ENCODE measurements at regions of chr19 and their contacts with region 1.

Region 1: GRCh38 chr19:38949580-38950367 is 19.0 kb downstream of the MRPS12 start:
- DNase-seq: peak; percentile 85 to 93 (median 90)
- ATAC-seq: peak; percentile 90 to 98 (median 96)
- H3K4me3 ChIP-seq: peak overlapping the region in 11 of 12 donors; percentile 9 to 50 (median 44)
- H3K27ac ChIP-seq: no peak overlapping the region
- H3K4me1 ChIP-seq: peaks cover 3 to 12% (median 8%) of the 10 kb centered on the region in 12 donors
- H3K27me3 ChIP-seq: peaks cover 0 to 11% (median 0%) of the 10 kb centered on the region in 9 donors
- CTCF ChIP-seq: no peak
- POLR2A ChIP-seq: no peak

Region 2: GRCh38 chr19:38417544-38418506 is 531.9 kb before region 1 on chr19:
- intact Hi-C with region 1: loop called in 1 of 10 experiments (anchors 10 kb)
- DNase-seq: peak; percentile 56 to 83 (median 76)
- ATAC-seq: peak; percentile 64 to 95 (median 86)
- H3K4me3 ChIP-seq: peak overlapping the region in 11 of 12 donors; percentile 18 to 56 (median 44)
- H3K27ac ChIP-seq: peak overlapping the region in 3 of 12 donors; percentile 18 to 52 (median 33)
- H3K4me1 ChIP-seq: peaks cover 0 to 16% (median 8%) of the 10 kb centered on the region in 12 donors
- H3K27me3 ChIP-seq: peaks cover 0 to 18% (median 0%) of the 10 kb centered on the region in 9 donors
- CTCF ChIP-seq: peak in 1 of 12 donors; percentile 5
- POLR2A ChIP-seq: no peak

Region 3: GRCh38 chr19:38544034-38544958 is 405.5 kb before region 1 on chr19:
- intact Hi-C with region 1: loop called in 1 of 10 experiments (anchors 5 kb)
- DNase-seq: peak in 4 of 5 donors; percentile 44 to 67 (median 55)
- ATAC-seq: peak; percentile 64 to 84 (median 83)
- H3K4me3 ChIP-seq: peak overlapping the region in 4 of 12 donors; percentile 9 to 44 (median 26)
- H3K27ac ChIP-seq: peak overlapping the region in 1 of 12 donors; percentile 14
- H3K4me1 ChIP-seq: peaks cover 0 to 14% (median 5%) of the 10 kb centered on the region in 12 donors
- H3K27me3 ChIP-seq: no peaks in the 10 kb centered on the region
- CTCF ChIP-seq: peak; percentile 43 to 69 (median 59)
- POLR2A ChIP-seq: no peak

Region 4: GRCh38 chr19:38606131-38606530 is 343.6 kb before region 1 on chr19:
- intact Hi-C with region 1: loop called in 1 of 10 experiments (anchors 10 kb)
- DNase-seq: no peak
- ATAC-seq: no peak
- H3K4me3 ChIP-seq: no peak overlapping the region
- H3K27ac ChIP-seq: no peak overlapping the region
- H3K4me1 ChIP-seq: no peaks in the 10 kb centered on the region
- H3K27me3 ChIP-seq: no peaks in the 10 kb centered on the region
- CTCF ChIP-seq: no peak
- POLR2A ChIP-seq: no peak

Region 5: DNA sequence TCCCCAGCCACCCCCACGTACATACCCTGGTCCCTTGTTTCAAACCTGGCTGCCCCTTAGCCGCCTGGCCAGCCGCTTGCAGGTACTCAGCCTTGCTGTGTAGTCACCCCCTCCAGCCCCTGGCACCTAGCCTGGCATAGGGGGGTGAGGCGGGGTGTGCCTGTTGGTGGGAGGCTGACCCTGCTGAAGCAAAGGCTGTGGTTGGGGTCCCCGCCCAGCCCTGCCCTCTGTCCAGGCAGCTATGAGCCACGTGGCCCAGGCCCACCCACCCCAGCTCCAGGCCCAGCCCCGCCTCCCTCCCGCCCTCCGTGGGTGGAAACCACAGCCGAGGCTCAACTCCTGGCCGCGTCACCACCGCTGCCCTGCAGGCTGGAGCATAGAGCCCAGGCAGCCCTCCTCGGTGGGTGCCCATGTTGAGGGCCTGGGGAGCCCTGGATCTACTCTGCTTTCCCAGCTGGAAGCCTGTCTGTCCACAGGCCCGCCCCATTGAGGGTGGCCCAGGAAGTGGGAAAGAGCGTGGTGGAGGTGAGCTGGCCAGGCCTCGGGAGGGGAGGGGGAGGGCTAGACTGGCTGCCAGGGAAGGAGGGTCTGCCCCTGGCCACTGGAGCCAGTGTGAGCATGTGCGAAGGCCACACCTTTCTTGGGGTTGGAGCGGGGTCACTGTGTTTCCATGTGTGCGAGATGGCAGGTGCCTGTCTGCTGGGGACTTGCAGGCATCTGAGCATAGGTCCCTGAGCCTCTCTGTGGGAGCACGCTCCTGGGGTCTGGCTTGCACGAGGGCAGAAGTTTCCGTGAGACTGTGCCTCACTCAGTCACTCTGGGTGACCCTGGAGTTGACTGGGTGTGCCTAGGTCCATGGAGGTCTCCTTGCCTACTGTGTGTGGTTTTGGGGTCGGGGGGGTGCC is 206.8 kb after region 1 on chr19:
- intact Hi-C with region 1: no loop called
- DNase-seq: no peak
- ATAC-seq: peak in 1 of 4 donors; percentile 30
- H3K4me3 ChIP-seq: no peak overlapping the region
- H3K27ac ChIP-seq: no peak overlapping the region
- H3K4me1 ChIP-seq: peaks cover 0 to 38% (median 15%) of the 10 kb centered on the region in 12 donors
- H3K27me3 ChIP-seq: no peaks in the 10 kb centered on the region
- CTCF ChIP-seq: no peak
- POLR2A ChIP-seq: no peak

Measured in heart left ventricle (tissue), 16 donors.